ENCODE measurements at regions of chr2 and their contacts with region 1.

Region 1: GRCh38 chr2:222311978-222312738 is 13.4 kb upstream of the PAX3 start:
- H3K4me3 ChIP-seq: peak overlapping the region; percentile 30
- H3K27ac ChIP-seq: no peak overlapping the region
- H3K4me1 ChIP-seq: peaks cover 6% of the 10 kb centered on the region; the same call in 1 of the 2 replicates
- CTCF ChIP-seq: no peak

Region 2: GRCh38 chr2:222298311-222299150 is 13.6 kb before region 1 on chr2 and contains the start of gene PAX3:
- CTCF ChIA-PET with region 1: interaction called, 3 read pairs
- POLR2A ChIA-PET with region 1: interaction called, 16 read pairs
- H3K4me3 ChIP-seq: peak within 1 kb of the TSS; percentile 65
- H3K27ac ChIP-seq: peak within 1 kb of the TSS; percentile 84
- H3K4me1 ChIP-seq: peaks cover 8% of the 10 kb centered on the region
- CTCF ChIP-seq: no peak; the same call in 1 of the 2 replicates

Region 3: DNA sequence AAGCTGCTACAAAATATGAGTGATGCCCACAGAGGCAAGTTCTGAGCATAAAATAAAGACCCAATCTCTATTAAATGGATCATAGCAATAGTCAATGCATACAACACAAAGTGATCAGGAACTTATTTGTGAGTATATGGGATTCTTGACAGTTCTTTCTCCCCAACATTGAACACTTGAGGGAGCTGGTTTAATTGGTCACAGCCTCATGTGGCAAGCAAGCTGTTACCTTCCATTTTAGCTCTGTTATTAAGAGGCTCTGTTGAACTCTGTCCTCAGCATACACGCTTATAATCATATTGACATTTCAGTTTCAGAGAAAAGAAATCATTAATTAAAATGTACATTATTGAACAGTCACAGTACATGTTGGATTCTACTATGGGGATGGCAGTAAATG is 24.3 kb after region 1 on chr2:
- CTCF ChIA-PET with region 1: no interaction called
- POLR2A ChIA-PET with region 1: no interaction called
- H3K4me3 ChIP-seq: no peak overlapping the region
- H3K27ac ChIP-seq: no peak overlapping the region
- H3K4me1 ChIP-seq: no peaks in the 10 kb centered on the region
- CTCF ChIP-seq: no peak

Region 4: DNA sequence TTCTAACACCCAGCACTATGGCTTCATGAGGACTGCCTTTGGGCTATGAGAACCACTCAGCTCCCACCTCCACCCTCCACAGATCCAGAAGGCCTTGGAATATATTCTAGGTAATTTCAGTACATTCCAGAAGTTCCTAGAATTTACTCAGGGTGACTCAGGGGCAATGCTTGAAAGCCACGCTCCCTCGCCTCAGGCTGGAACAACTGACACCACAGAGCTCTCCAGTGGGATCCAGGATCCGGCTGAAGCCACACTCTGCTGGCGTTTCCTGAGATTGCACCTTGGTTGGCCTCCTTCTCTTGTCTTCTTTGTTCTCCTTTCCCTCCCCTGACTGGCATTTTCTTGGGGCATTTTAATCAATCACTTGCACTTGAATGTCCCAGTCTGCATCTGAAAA is 647.2 kb after region 1 on chr2:
- CTCF ChIA-PET with region 1: no interaction called
- POLR2A ChIA-PET with region 1: no interaction called
- H3K4me3 ChIP-seq: no peak overlapping the region
- H3K27ac ChIP-seq: no peak overlapping the region
- H3K4me1 ChIP-seq: no peaks in the 10 kb centered on the region
- CTCF ChIP-seq: no peak

Measured in HEK293 (cell line).